ENCODE measurements at regions of chr6 and their contacts with region 1.

Region 1: GRCh38 chr6:14046476-14047068 is 71.0 kb upstream of the CD83 start:
- DNase-seq: peak; percentile 64
- H3K4me3 Mint-ChIP-seq: no peak overlapping the region
- H3K27ac Mint-ChIP-seq: no peak overlapping the region
- H3K4me1 Mint-ChIP-seq: no peaks in the 10 kb centered on the region
- H3K27me3 Mint-ChIP-seq: peaks cover 20% of the 10 kb centered on the region

Region 2: GRCh38 chr6:13873285-13874190 is 173.0 kb before region 1 on chr6:
- CTCF ChIA-PET with region 1: interaction called, 16 read pairs
- POLR2A ChIA-PET with region 1: no interaction called
- intact Hi-C with region 1: no loop called
- DNase-seq: peak; percentile 82
- H3K4me3 Mint-ChIP-seq: peak overlapping the region; percentile 49
- H3K27ac Mint-ChIP-seq: no peak overlapping the region
- H3K4me1 Mint-ChIP-seq: peaks cover 12% of the 10 kb centered on the region
- H3K27me3 Mint-ChIP-seq: peaks cover 14% of the 10 kb centered on the region

Region 3: DNA sequence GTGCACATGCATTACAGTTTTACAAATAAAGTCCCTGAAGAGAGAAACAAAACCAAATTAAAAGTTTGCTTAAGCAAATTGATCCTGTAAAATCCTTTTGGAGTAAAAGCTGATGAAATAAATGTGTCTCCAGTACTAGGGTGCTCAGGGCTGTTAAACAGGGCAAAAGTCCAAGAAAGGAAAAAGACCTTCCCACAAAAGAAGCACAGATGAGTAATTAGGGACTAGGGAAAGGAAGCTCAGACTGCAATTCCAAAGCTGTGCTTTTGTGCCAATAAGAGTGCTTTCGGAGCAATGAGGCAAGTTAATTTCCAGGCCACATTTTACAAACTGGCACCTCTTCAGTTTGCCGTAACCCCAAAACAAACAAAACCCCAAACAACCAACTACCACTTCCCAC is 132.2 kb before region 1 on chr6:
- CTCF ChIA-PET with region 1: interaction called, 70 read pairs
- POLR2A ChIA-PET with region 1: no interaction called
- intact Hi-C with region 1: loop called (anchors 1 kb)
- DNase-seq: no peak
- H3K4me3 Mint-ChIP-seq: no peak overlapping the region
- H3K27ac Mint-ChIP-seq: no peak overlapping the region
- H3K4me1 Mint-ChIP-seq: no peaks in the 10 kb centered on the region
- H3K27me3 Mint-ChIP-seq: peaks cover 23% of the 10 kb centered on the region

Region 4: DNA sequence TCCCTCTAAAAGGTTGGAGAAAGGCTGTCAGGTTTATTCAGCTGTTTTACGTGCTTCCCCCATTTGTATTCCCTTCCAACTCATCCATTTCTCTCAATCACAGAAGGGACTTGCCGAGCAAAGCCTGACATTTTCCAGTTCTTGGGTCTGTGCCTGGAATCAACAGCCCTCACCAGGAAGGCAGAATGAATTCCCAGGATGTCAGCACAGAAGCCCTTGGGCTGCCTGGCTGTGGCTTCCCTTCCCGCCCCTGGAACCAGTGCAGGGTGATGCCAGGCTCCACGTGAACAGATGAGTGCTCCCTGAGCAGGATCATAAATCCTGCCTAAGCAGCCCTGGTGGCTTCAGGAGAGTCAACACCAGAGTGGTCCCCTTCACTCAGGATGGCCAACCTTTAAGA is 15.1 kb before region 1 on chr6:
- CTCF ChIA-PET with region 1: interaction called, 50 read pairs
- POLR2A ChIA-PET with region 1: no interaction called
- intact Hi-C with region 1: no loop called
- DNase-seq: no peak
- H3K4me3 Mint-ChIP-seq: no peak overlapping the region
- H3K27ac Mint-ChIP-seq: no peak overlapping the region
- H3K4me1 Mint-ChIP-seq: no peaks in the 10 kb centered on the region
- H3K27me3 Mint-ChIP-seq: peaks cover 39% of the 10 kb centered on the region

Region 5: DNA sequence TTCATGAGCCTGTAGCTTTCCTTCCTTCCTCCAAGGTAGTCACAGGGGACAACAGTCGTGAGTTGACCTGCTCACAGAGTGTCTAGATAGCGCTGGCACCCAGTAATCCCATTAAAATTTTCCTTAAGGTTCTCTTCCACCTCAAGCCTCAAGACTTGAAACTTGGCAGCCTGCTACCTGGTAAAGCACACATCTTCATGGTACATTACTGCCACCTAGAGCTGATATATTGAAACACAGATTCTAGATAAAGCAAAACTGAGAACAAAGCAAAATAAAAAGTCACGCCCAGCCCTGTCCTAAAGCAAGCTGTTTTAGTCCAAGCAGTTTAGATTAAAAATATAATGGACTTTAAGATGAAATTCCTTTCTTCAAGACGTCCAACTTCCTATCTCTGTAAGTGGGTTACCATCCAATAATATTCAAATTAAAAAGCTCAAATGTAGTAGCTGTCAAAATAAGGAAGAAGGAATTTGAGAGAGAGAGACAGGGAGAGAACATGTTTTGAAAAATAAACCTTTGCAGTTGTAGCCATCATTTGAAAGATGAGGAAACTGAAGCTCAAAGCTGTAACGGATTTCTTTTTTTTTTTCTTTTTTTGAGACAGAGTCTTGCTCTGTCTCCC is 20.3 kb after region 1 on chr6:
- CTCF ChIA-PET with region 1: interaction called, 73 read pairs
- POLR2A ChIA-PET with region 1: no interaction called
- intact Hi-C with region 1: loop called (anchors 2 kb)
- DNase-seq: no peak
- H3K4me3 Mint-ChIP-seq: no peak overlapping the region
- H3K27ac Mint-ChIP-seq: no peak overlapping the region
- H3K4me1 Mint-ChIP-seq: peaks cover 13% of the 10 kb centered on the region
- H3K27me3 Mint-ChIP-seq: peaks cover 6% of the 10 kb centered on the region

Region 6: DNA sequence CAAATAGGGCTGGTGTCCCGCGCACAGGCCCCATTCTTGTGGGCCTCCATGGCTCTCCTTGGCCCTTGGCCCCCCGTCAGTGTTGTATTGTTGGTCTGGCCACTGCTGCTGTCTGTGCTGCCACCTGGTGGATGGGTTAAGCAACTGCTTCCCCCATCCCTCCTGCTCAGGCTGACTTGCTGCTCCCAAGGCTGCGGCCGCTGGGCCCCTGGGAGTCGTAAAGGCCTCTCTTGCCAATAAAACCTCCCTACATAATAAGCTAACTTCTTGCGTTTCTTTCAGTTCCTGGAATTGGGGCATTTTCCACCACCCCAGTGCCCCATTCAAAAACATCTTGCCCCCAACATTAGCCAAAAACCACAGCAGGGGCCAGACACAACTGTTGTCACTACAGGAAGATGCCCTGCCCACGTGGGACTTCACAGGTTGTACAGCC is 98.1 kb after region 1 on chr6:
- CTCF ChIA-PET with region 1: interaction called, 16 read pairs
- POLR2A ChIA-PET with region 1: no interaction called
- intact Hi-C with region 1: loop called (anchors 1 kb)
- DNase-seq: peak; percentile 81
- H3K4me3 Mint-ChIP-seq: no peak overlapping the region
- H3K27ac Mint-ChIP-seq: no peak overlapping the region
- H3K4me1 Mint-ChIP-seq: no peaks in the 10 kb centered on the region
- H3K27me3 Mint-ChIP-seq: no peaks in the 10 kb centered on the region